CD14-positive monocyte (primary cell): ENCODE measurements at regions of chr20 and their contacts with region 1.

Region 1: DNA sequence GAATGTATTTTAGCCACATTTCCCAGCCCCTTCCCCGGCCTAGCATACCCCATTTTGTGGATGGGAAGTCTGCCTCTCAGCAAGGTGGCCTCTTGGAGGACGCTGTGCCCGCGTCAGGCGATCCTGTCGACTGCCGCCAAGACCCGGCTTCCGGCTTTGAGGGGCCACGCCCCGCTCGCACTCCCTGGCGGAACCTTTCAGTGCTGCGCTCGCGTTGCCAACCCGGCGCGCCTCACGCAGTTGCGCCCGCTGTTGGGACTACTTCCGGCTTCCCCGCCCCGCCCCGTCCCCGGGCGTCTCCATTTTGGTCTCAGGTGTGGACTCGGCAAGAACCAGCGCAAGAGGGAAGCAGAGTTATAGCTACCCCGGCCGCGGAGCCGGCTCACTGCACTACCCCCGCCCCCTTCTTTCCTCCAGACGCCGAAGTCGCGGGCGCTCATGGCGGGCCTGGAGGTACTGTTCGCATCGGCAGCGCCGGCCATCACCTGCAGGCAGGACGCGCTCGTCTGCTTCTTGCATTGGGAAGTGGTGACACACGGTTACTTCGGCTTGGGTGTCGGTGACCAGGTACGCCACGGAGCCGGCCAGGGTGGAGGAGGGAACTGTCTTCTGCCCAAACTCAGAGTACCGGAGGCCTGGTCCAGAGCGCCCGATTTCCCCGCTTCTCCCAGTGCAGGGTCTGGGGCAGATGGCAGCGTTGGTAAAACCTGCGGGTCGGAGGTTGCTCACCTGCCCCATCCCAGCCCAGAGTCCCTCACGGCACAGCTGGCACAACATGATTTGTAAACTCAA is at the start of gene PSMF1:
- DNase-seq: peak; percentile 92 to 95 (median 92)
- H3K4me3 ChIP-seq: peak within 1 kb of the TSS; percentile 59 to 94 (median 82)
- H3K4me3 Mint-ChIP-seq: peak within 1 kb of the TSS; percentile 91 to 93
- H3K27ac ChIP-seq: peak within 1 kb of the TSS; percentile 7 to 85
- H3K27ac Mint-ChIP-seq: peak within 1 kb of the TSS; percentile 71 to 96 (median 92)
- H3K4me1 ChIP-seq: peaks cover 45 to 51% of the 10 kb centered on the region in 2 donors
- H3K4me1 Mint-ChIP-seq: peaks cover 53% of the 10 kb centered on the region
- H3K27me3 ChIP-seq: no peaks in the 10 kb centered on the region
- H3K27me3 Mint-ChIP-seq: peaks cover 2 to 4% (median 2%) of the 10 kb centered on the region in 3 donors
- CTCF ChIP-seq: no peak
- polyA plus RNA-seq, gene PSMF1: 103 to 349 (median 138) TPM

Region 2: GRCh38 chr20:543369-544152 is 575.0 kb before region 1 on chr20 and contains the start of gene CSNK2A1:
- intact Hi-C with region 1: loop called in 1 of 2 experiments (anchors 10 kb)
- DNase-seq: peak; percentile 92 to 96 (median 95)
- H3K4me3 ChIP-seq: peak within 1 kb of the TSS; percentile 86 to 98 (median 97)
- H3K4me3 Mint-ChIP-seq: peak within 1 kb of the TSS; percentile 86 to 92
- H3K27ac ChIP-seq: peak within 1 kb of the TSS; percentile 75 to 94
- H3K27ac Mint-ChIP-seq: peak within 1 kb of the TSS; percentile 55 to 98 (median 97)
- H3K4me1 ChIP-seq: peaks cover 19 to 48% of the 10 kb centered on the region in 2 donors
- H3K4me1 Mint-ChIP-seq: peaks cover 45% of the 10 kb centered on the region
- H3K27me3 ChIP-seq: peaks cover 0 to 5% of the 10 kb centered on the region in 2 donors
- H3K27me3 Mint-ChIP-seq: peaks cover 4 to 8% (median 5%) of the 10 kb centered on the region in 3 donors
- CTCF ChIP-seq: no peak
- polyA plus RNA-seq, gene CSNK2A1: 31.7 to 55.5 (median 35.2) TPM

Region 3: DNA sequence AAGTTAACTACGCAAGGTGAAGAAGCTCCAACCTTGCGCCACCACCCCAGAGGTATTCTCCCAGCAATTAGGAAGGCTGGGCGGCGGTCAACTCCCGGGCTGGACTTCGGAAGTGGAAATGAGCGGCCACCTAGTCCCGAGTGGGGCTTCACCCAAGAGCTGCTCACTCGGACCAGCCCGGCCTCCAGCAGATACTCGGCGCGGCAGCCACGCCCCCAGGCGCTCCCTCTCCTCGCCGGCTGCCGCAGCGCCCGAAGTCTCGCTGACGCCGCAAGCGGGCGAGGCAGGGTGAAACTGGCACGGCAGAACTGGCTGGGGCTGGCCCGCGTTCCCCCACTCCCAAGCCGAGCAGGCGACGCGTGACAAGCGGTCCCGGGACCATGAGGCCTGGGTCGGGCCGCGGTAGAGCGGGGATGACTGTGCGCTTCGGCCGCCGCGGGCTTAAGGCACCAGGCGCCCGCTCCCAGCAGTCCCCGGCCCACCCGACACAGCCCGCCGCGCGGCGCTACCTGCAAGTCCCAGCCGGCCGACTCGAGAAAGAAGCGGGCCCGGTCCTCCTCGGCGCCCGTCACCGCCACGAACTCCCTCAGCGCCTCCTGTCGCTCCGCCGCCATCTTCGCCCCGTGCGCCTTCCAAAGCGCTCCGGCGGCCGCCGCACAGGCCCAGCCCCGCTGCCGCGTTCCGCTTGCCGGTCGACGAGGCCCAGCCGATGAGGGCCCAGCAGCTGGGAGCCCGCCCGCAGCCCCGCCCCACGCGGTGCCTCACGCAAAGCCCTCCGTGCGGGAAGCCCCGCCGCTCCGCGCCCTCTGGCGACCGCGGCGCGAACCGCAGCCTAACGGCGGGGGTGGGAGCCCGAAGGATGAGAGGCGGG is 347.9 kb after region 1 on chr20 and contains the start of gene NSFL1C:
- intact Hi-C with region 1: loop called in 1 of 2 experiments (anchors 5 kb)
- DNase-seq: peak; percentile 90 to 94 (median 93)
- H3K4me3 ChIP-seq: peak within 1 kb of the TSS; percentile 54 to 87 (median 85)
- H3K4me3 Mint-ChIP-seq: peak within 1 kb of the TSS; percentile 87 to 91
- H3K27ac ChIP-seq: peak within 1 kb of the TSS; percentile 74 to 97
- H3K27ac Mint-ChIP-seq: peak within 1 kb of the TSS; percentile 96 to 100 (median 99)
- H3K4me1 ChIP-seq: peaks cover 70 to 83% of the 10 kb centered on the region in 2 donors
- H3K4me1 Mint-ChIP-seq: peaks cover 74% of the 10 kb centered on the region
- H3K27me3 ChIP-seq: no peaks in the 10 kb centered on the region
- H3K27me3 Mint-ChIP-seq: peaks cover 0 to 2% (median 0%) of the 10 kb centered on the region in 3 donors
- CTCF ChIP-seq: peak; percentile 100
- polyA plus RNA-seq, gene NSFL1C: 52.8 to 80.8 (median 56.8) TPM